ENCODE measurements at regions of chrX and their contacts with region 1.

Region 1: DNA sequence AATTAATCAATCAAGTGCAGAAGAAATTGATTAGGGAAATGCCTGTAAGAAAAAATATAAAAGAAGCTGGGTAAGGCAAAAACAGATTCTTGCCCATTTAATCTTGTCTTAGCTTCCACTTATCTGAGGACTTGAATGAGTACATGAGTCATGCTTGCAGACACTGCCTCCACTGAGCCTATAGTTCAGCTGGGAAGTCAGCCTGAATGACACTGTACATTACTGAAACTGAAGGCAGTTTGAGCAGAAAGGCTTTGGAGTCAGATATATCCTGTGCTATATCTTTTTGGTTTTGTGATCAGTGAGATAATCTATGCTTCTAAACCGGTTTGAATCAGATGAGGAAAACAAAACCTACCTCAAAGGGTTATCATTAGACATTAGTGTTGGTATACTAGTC is 61.3 kb downstream of the NUDT11 start:
- DNase-seq: no peak
- ATAC-seq: no peak
- H3K4me3 ChIP-seq: no peak overlapping the region
- H3K27ac ChIP-seq: no peak overlapping the region
- H3K4me1 ChIP-seq: no peaks in the 10 kb centered on the region
- H3K27me3 ChIP-seq: peaks cover 0 to 2% (median 0%) of the 10 kb centered on the region in 3 donors
- CTCF ChIP-seq: no peak
- POLR2A ChIP-seq: no peak

Region 2: GRCh38 chrX:51336584-51336983 is 98.5 kb before region 1 on chrX:
- in situ Hi-C with region 1: loop called in 1 of 4 experiments (anchors 25 kb)
- intact Hi-C with region 1: no loop called
- DNase-seq: no peak
- ATAC-seq: no peak
- H3K4me3 ChIP-seq: no peak overlapping the region
- H3K27ac ChIP-seq: no peak overlapping the region
- H3K4me1 ChIP-seq: no peaks in the 10 kb centered on the region
- H3K27me3 ChIP-seq: peaks cover 0 to 12% (median 11%) of the 10 kb centered on the region in 3 donors
- CTCF ChIP-seq: peak in 1 of 5 experiments; percentile 35
- POLR2A ChIP-seq: no peak